ENCODE measurements at regions of chr5 and their contacts with region 1.

Region 1: DNA sequence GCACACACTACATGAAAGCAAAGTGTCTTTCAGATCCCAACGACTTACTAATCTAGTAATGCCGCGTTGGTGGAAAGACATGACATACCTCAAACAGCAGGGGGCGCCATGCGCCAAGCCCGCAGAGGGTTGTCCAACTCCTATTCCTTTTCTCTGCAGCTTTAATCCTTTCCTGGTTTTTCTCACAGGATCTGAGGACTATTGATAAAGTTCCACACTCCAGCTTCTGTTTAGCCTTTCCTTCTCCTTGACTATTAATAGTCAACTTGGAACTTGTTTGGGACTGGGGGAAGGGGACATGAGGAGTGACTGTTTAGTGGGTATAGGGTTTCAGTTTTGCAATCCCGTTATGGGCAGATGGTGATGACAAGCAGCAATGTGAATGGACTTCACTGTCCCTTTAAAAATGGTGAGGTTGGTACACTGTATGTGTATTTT is 62.9 kb downstream of the OTULIN start:
- DNase-seq: peak; percentile 59
- H3K4me3 ChIP-seq: no peak overlapping the region
- H3K27ac ChIP-seq: no peak overlapping the region
- H3K27me3 ChIP-seq: no peaks in the 10 kb centered on the region
- CTCF ChIP-seq: peak; percentile 97

Region 2: GRCh38 chr5:14476786-14477435 is 250.5 kb before region 1 on chr5:
- CTCF ChIA-PET with region 1: no interaction called
- POLR2A ChIA-PET with region 1: no interaction called
- DNase-seq: peak; percentile 30
- H3K4me3 ChIP-seq: no peak overlapping the region
- H3K27ac ChIP-seq: peak overlapping the region; percentile 41
- H3K27me3 ChIP-seq: no peaks in the 10 kb centered on the region
- CTCF ChIP-seq: no peak

Region 3: DNA sequence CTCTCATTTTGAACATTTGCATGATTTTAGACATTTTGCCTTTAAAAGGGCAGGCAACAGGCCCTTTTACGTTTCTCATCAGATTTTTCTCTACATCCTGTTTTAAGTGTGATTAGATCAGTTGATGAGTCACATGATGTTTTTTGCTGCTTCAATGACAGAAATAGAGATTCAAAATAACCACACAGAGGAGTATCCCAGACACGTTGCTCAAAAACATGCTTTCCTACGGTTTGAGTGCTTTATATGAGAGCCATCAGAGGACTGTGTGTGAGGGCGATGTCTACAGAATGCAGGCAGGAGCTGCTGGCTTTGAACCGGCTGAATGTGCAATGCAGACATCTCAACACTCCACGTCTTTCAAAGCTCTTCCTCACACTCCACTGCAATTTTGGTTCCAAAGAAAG is 20.8 kb before region 1 on chr5:
- CTCF ChIA-PET with region 1: interaction called, 15 read pairs
- POLR2A ChIA-PET with region 1: no interaction called
- DNase-seq: no peak
- H3K4me3 ChIP-seq: no peak overlapping the region
- H3K27ac ChIP-seq: peak overlapping the region; percentile 47
- H3K27me3 ChIP-seq: no peaks in the 10 kb centered on the region
- CTCF ChIP-seq: no peak

Region 4: DNA sequence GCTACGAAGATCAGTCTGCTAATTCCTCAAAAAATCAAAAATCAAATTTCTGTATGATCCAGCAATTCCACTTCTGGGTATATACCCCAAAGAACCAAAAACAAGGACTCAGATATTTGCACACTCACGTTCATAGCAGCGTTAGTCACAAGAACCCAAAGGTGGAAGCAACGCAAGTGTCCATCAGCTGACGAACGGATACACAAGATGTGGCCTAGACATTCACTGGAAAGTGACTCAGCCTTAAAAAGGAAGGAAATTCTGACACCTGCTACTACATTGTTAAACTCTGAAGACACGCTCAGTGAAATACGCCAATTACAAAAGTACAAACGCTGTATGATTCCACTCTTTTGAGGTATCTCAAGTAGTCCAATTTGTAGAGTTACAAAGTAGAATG is 30.4 kb after region 1 on chr5:
- CTCF ChIA-PET with region 1: interaction called, 19 read pairs
- POLR2A ChIA-PET with region 1: interaction called, 3 read pairs
- DNase-seq: no peak
- H3K4me3 ChIP-seq: no peak overlapping the region
- H3K27ac ChIP-seq: no peak overlapping the region
- H3K27me3 ChIP-seq: no peaks in the 10 kb centered on the region
- CTCF ChIP-seq: no peak

Region 5: DNA sequence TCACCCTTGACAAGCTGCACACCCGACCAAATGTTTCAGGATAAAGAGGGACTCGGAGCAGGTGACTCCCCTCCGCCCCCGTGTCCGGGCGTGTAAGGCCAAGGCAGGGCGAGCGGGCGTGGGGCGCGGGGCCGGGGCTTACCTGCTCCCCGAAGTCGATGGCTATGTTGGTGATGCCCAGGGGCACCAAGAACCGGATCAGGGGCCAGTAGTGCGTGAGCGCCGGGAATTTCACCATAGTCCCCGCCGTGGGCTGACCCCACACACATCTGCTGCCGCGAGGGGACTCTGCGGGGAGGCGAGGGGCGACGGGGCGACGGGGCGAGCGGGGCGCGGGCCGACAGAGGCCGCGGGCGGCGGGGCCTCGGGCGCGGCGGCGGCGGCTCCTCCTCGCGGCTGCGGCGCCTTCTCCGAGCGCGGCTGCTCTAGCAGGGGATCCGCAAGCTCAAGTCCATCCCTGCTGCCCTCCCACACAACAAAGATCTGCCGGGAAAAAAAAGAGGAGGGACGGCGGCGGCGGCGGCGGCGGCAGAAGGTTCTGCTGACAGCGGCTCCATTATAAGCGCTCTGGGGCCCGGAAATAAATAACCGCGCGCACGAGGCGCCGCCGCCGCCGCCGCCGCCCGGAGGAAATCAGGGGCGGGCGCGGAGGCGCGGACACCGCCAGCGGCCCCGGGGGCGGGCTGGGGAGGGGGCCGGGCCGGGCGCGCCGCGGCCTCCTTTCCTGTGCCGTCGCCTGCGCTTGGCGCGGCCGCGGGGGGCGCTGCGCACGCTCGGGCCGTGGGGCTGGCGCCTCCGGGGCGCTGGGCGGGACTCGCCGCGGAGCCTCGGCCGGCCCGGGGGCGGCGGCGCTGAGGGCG is 144.0 kb after region 1 on chr5 and contains the start of gene ANKH:
- CTCF ChIA-PET with region 1: interaction called, 18 read pairs
- POLR2A ChIA-PET with region 1: interaction called, 3 read pairs
- DNase-seq: peak; percentile 16
- H3K4me3 ChIP-seq: peak within 1 kb of the TSS; percentile 79
- H3K27ac ChIP-seq: peak within 1 kb of the TSS; percentile 34
- H3K27me3 ChIP-seq: no peaks in the 10 kb centered on the region
- CTCF ChIP-seq: no peak
- polyA plus RNA-seq, gene ANKH: 14.2 and 14.3 TPM in 2 replicates

Region 6: GRCh38 chr5:15003511-15003920 is 276.1 kb after region 1 on chr5:
- CTCF ChIA-PET with region 1: interaction called, 192 read pairs
- POLR2A ChIA-PET with region 1: no interaction called
- DNase-seq: peak; percentile 39
- H3K4me3 ChIP-seq: no peak overlapping the region
- H3K27ac ChIP-seq: no peak overlapping the region
- H3K27me3 ChIP-seq: peaks cover under 1% of the 10 kb centered on the region
- CTCF ChIP-seq: peak; percentile 82

Region 7: DNA sequence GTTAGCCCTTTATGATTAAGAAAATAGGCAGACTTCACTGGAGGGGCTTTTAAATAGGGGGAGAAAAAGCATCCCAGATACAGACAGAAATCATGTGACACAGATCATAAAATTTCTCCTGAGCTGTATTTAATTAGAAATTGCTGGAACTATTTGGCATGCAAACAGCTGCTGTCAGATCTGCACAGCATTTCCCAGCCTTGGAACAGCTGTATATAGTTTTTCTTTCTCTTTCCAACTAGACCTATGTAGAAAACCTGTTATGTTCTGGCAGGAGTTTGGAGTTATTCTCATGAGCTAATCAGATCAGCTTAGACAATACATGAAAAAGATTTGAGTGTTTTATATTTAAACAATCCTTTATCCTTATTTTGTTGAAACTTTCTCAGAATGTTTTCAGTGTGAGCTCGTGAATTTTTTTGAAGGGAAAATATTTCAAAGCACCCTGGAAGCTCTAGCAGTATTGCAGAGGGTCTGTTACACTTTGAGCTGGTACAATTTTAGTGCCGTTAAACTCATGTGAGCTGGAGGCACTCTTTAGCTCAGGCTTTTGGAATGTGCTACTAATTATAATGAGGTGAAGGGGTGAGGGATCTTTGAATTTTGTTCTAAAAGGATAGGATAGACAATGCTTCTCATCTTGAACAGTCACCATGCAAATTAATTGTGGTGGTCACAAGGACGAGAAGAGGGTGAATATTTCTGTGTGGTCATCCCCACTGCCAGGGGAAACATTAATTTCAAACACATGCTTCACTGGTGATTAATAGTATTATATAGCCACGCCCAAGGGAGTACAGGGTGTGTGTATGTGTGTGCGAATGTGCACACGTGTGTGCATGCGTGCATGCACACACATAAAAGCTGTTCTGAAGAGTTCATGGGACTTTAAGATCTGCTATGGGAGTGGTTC is 533.2 kb after region 1 on chr5:
- CTCF ChIA-PET with region 1: no interaction called
- POLR2A ChIA-PET with region 1: no interaction called
- DNase-seq: no peak
- H3K4me3 ChIP-seq: no peak overlapping the region
- H3K27ac ChIP-seq: no peak overlapping the region
- H3K27me3 ChIP-seq: no peaks in the 10 kb centered on the region
- CTCF ChIP-seq: no peak

Measured in AG04450 (cell line).